Endothelial cell of umbilical vein (primary cell): ENCODE measurements at regions of chr20 and their contacts with region 1.

Region 1: GRCh38 chr20:50070991-50071888 is 41.7 kb downstream of the UBE2V1 start:
- DNase-seq: peak; percentile 85
- H3K4me3 ChIP-seq: peak overlapping the region in 1 of 3 experiments; percentile 32
- H3K27ac ChIP-seq: no peak overlapping the region
- H3K4me1 ChIP-seq: no peaks in the 10 kb centered on the region
- H3K27me3 ChIP-seq: no peaks in the 10 kb centered on the region
- CTCF ChIP-seq: peak; percentile 99 to 100
- POLR2A ChIP-seq: no peak

Region 2: GRCh38 chr20:49936153-49937027 is 134.8 kb before region 1 on chr20 and contains the start of gene RNF114:
- CTCF ChIA-PET with region 1: interaction called, 14 read pairs
- POLR2A ChIA-PET with region 1: no interaction called
- dilution Hi-C with region 1: no loop called
- intact Hi-C with region 1: loop called (anchors 1 kb)
- DNase-seq: peak; percentile 83
- H3K4me3 ChIP-seq: peak within 1 kb of the TSS; percentile 44 to 99 (median 82)
- H3K27ac ChIP-seq: peak within 1 kb of the TSS; percentile 29
- H3K4me1 ChIP-seq: peaks cover 20% of the 10 kb centered on the region
- H3K27me3 ChIP-seq: no peaks in the 10 kb centered on the region
- CTCF ChIP-seq: no peak
- POLR2A ChIP-seq: peak; percentile 92
- total RNA-seq, gene RNF114: 41.6 and 45.8 TPM in 2 replicates

Region 3: GRCh38 chr20:49982346-49983122 is 88.7 kb before region 1 on chr20 and contains the start of gene SNAI1:
- CTCF ChIA-PET with region 1: interaction called, 1,187 read pairs
- POLR2A ChIA-PET with region 1: interaction called, 34 read pairs
- dilution Hi-C with region 1: no loop called
- intact Hi-C with region 1: loop called (anchors 1 kb)
- DNase-seq: peak; percentile 84
- H3K4me3 ChIP-seq: peak within 1 kb of the TSS; percentile 49 to 97 (median 89)
- H3K27ac ChIP-seq: peak within 1 kb of the TSS; percentile 87
- H3K4me1 ChIP-seq: peaks cover 49% of the 10 kb centered on the region
- H3K27me3 ChIP-seq: no peaks in the 10 kb centered on the region
- CTCF ChIP-seq: peak; percentile 61 to 68
- POLR2A ChIP-seq: peak; percentile 99
- total RNA-seq, gene SNAI1: 13.4 and 14.5 TPM in 2 replicates

Region 4: DNA sequence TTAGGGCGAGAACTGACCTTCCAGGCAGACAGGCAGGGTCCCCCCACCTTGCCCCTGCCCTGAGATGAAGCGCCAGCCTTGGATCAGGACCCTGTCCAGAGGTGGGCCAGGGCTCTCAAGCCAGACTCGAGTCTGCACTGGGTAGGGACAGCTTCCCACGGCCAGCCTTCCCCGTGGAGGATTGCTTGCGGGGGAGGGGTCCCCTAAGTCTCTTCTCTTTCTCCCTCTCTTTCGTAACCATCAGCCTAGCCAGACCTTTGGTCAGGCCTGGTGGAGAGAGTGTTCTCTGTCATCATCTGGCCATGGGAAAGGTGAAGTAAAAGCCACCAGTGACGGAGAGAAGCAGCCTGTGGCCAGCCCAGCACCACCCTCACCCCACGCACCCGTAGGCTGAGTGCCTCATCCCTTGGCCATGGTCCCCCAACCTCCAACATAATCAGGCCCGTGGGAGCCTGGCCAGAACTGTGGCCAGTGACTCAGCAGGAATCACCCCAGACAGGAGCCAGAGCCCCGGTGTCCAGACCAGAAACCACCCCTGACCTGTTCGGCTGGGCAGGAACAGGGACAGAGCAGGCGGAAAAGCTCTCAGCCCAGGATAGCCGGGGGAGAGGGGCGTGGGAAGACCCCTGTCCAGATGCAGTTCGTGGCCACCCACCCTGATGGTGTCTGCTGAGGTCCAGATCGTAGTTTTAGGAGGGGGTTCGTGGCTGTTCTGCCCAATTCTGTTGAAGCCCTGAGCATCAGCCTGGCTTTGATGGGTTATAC is 41.4 kb before region 1 on chr20:
- CTCF ChIA-PET with region 1: interaction called, 10 read pairs
- POLR2A ChIA-PET with region 1: no interaction called
- dilution Hi-C with region 1: no loop called
- intact Hi-C with region 1: loop called (anchors 5 kb)
- DNase-seq: peak; percentile 93
- H3K4me3 ChIP-seq: peak overlapping the region in 1 of 3 experiments; percentile 2
- H3K27ac ChIP-seq: peak overlapping the region; percentile 99
- H3K4me1 ChIP-seq: peaks cover 57% of the 10 kb centered on the region
- H3K27me3 ChIP-seq: no peaks in the 10 kb centered on the region
- CTCF ChIP-seq: no peak
- POLR2A ChIP-seq: peak; percentile 66

Region 5: DNA sequence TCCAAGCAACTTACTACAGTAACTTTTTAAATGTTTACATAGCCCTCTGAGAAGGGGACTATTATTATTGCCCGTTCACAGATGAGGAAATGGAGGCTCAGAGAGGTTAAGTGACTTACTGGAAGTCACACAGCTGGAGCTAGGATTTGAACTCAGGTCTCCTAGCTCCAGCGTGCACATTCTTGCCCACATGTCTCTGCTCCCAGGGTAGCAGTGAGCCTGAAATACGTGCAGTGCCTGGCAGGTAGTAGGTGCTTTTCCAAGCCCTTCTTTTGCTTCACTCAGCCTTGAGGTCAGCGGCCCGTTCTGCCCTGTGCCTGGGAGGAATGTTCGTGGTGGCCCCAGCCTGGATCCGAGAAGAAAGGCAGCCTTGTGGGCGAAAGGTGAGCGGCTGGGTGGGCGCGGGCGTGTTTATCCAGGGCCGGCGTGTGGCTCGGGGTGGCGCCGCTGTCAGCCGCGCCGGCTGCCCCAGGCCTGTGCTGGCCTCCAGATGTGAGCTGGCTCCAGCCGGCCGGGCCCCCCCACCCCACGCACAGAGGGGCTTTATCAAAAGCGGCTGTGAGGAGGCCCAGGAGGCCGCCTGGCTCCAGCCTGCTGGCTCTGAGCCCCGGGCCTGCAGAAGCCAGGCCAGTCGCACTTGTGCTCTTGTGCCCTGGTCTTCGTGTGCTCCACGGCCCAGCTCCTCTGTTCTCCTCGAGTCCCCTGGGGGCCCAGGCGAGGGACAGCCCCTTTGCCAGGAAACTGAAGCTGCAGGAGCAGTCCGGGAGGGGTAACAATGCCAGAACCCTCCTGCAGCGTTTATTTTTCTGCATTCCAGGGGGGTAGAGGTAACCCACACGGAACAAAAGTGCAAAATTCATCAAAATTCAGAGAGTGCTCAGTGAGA is 16.4 kb before region 1 on chr20:
- CTCF ChIA-PET with region 1: interaction called, 34 read pairs
- POLR2A ChIA-PET with region 1: no interaction called
- dilution Hi-C with region 1: no loop called
- intact Hi-C with region 1: no loop called
- DNase-seq: no peak
- H3K4me3 ChIP-seq: no peak overlapping the region
- H3K27ac ChIP-seq: no peak overlapping the region
- H3K4me1 ChIP-seq: no peaks in the 10 kb centered on the region
- H3K27me3 ChIP-seq: no peaks in the 10 kb centered on the region
- CTCF ChIP-seq: no peak
- POLR2A ChIP-seq: no peak

Region 6: DNA sequence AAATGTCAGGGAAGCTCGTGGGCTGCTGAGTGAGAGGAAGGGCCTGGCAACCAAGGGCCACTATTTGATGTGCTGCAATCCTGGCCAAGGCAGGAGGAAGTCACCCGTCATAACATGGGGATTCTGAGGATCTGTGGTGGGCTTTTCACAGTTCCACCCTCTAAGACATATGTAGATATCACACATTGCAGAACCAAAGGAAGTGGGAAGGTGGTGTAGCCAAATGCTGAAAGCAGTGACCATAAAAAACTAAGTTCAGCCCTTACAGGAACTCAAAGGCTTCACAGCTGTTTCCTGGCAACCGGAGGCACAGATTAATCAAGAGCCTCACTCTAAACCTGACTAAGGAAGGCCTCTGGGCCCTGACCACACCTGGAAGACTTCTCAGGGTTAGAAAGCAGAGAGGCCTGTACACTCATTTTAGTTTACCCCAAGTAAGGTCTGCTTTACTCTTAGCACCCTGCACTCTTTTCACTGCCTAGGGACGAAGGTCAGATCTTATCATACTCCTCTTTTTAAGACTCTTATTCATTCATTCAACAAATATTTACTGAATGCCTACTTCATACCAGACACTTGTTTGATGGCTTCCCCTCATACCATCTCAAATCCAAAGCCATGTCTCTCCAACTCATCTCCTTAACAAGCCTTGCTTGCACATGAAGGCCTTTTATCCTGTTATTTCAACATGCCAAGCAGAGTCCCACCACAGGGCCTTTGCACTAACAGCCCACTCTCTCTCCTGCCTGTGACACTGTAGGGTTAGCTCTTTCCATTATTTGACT is 39.1 kb after region 1 on chr20:
- CTCF ChIA-PET with region 1: interaction called, 11 read pairs
- POLR2A ChIA-PET with region 1: interaction called, 5 read pairs
- dilution Hi-C with region 1: no loop called
- intact Hi-C with region 1: no loop called
- DNase-seq: peak; percentile 83
- H3K4me3 ChIP-seq: no peak overlapping the region
- H3K27ac ChIP-seq: peak overlapping the region; percentile 84
- H3K4me1 ChIP-seq: peaks cover 67% of the 10 kb centered on the region
- H3K27me3 ChIP-seq: no peaks in the 10 kb centered on the region
- CTCF ChIP-seq: no peak
- POLR2A ChIP-seq: no peak